ENCODE measurements at regions of chr9 and their contacts with region 1.

Region 1: GRCh38 chr9:109098171-109098959 is 21.4 kb downstream of the TMEM245 start:
- DNase-seq: no peak
- ATAC-seq: no peak
- H3K4me3 ChIP-seq: no peak overlapping the region
- H3K4me3 Mint-ChIP-seq: peak overlapping the region; percentile 22 to 69 (median 63)
- H3K27ac ChIP-seq: no peak overlapping the region
- H3K27ac Mint-ChIP-seq: peak overlapping the region; percentile 65 to 90 (median 74)
- H3K4me1 ChIP-seq: peaks cover 20 to 79% of the 10 kb centered on the region in 2 donors
- H3K4me1 Mint-ChIP-seq: peaks cover 57 to 97% (median 95%) of the 10 kb centered on the region in 7 donors
- H3K27me3 ChIP-seq: no peaks in the 10 kb centered on the region
- H3K27me3 Mint-ChIP-seq: no peaks in the 10 kb centered on the region

Region 2: DNA sequence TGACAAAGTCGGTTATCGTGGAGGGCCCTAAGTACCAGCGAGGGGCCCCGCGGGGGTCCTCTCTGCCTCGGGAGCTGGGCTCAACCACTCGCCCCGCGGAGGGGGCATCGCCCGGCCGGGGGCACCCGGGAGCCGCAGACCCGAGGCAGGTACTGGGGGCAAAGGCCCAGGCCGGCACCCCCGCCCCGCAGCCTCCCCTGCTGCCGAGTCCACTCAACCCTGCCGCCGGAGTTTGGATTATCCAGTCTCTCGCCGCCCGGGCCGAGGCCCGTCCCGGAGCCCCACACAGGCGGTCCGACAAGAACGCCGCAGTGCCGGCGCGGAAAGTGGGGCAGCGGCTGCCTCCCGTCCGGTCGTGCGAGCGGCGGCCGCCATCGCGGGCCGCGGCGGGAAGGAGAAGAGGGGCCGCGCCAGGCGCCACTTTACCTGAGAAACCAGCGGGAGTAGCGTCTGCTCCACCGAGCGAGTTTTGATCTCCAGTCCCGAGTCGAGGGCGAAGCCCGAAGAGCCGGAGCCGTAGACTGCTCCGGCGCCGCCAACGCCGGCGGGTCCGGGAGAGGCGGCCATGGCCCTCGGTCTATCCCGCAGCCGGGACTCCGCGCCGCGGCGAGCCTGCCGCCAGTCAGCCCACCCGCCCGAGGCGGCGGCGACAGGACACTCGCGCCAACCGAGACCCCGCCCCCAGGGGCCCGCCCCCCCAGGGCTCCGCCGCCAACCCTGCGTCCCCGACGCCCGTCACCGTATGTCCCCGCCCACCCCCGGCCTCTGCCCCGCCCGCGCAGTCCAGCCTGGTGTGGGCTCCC is 85.3 kb before region 1 on chr9 and contains the start of gene CTNNAL1:
- CTCF ChIA-PET with region 1: no interaction called
- POLR2A ChIA-PET with region 1: no interaction called
- intact Hi-C with region 1: loop called (anchors 5 kb)
- DNase-seq: peak; percentile 68 to 88 (median 78)
- ATAC-seq: peak; percentile 98
- H3K4me3 ChIP-seq: peak within 1 kb of the TSS; percentile 72
- H3K4me3 Mint-ChIP-seq: peak within 1 kb of the TSS; percentile 93 to 99 (median 97)
- H3K27ac ChIP-seq: peak within 1 kb of the TSS; percentile 77
- H3K27ac Mint-ChIP-seq: peak within 1 kb of the TSS; percentile 79 to 95 (median 92)
- H3K4me1 ChIP-seq: peaks cover 6 to 13% of the 10 kb centered on the region in 2 donors
- H3K4me1 Mint-ChIP-seq: peaks cover 17 to 34% (median 21%) of the 10 kb centered on the region in 7 donors
- H3K27me3 ChIP-seq: no peaks in the 10 kb centered on the region
- H3K27me3 Mint-ChIP-seq: peaks cover 0 to 22% (median 4%) of the 10 kb centered on the region in 5 donors
- total RNA-seq, gene CTNNAL1: 1.1 to 9.9 (median 2.5) TPM

Region 3: GRCh38 chr9:109074236-109074889 is 24.0 kb before region 1 on chr9:
- CTCF ChIA-PET with region 1: no interaction called
- POLR2A ChIA-PET with region 1: no interaction called
- intact Hi-C with region 1: loop called in 1 of 2 experiments (anchors 2 kb)
- DNase-seq: no peak
- ATAC-seq: no peak
- H3K4me3 ChIP-seq: no peak overlapping the region
- H3K4me3 Mint-ChIP-seq: no peak overlapping the region
- H3K27ac ChIP-seq: no peak overlapping the region
- H3K27ac Mint-ChIP-seq: peak overlapping the region in 2 of 9 donors; percentile 13 to 31
- H3K4me1 ChIP-seq: no peaks in the 10 kb centered on the region
- H3K4me1 Mint-ChIP-seq: peaks cover 0 to 2% (median 0%) of the 10 kb centered on the region in 7 donors
- H3K27me3 ChIP-seq: no peaks in the 10 kb centered on the region
- H3K27me3 Mint-ChIP-seq: no peaks in the 10 kb centered on the region

Region 4: DNA sequence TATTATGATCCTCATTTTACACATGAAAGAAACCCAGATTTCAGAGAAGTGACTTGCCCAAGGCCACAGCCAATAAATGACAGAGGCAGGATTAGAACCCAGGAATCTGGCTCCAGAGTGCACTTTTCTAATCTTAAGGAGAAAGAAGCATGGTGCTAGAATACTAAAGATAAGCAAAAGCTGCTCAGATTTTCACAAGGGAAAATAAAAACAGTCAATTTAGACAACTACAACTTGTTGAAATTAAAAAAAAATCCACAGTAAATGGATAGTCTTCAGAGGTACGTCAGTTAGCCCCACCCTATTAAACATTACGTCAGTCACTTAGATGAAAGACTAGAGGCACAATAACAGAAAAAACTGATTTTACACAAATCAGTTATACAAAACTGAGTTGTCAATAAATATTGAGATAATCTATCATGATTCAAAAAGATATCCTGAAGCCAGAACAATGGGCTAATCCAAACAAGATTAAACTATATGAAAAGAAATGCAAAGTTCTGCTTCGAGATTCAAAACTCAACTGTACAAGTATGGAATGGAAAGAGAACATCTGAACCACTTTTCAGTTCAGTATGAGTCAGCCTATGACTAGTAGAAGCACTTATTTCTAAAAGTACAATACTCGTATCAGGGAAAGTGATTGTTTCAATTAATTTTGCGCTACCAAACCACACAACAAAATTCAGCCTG is 12.1 kb after region 1 on chr9:
- CTCF ChIA-PET with region 1: interaction called, 5 read pairs
- POLR2A ChIA-PET with region 1: interaction called, 11 read pairs
- intact Hi-C with region 1: loop called (anchors 1 kb)
- DNase-seq: peak in 7 of 9 donors; percentile 46 to 73 (median 63)
- ATAC-seq: peak; percentile 88
- H3K4me3 ChIP-seq: peak overlapping the region; percentile 28
- H3K4me3 Mint-ChIP-seq: peak overlapping the region; percentile 18 to 87 (median 69)
- H3K27ac ChIP-seq: peak overlapping the region; percentile 77
- H3K27ac Mint-ChIP-seq: peak overlapping the region; percentile 84 to 98 (median 94)
- H3K4me1 ChIP-seq: peaks cover 18 to 52% of the 10 kb centered on the region in 2 donors
- H3K4me1 Mint-ChIP-seq: peaks cover 60 to 90% (median 89%) of the 10 kb centered on the region in 7 donors
- H3K27me3 ChIP-seq: no peaks in the 10 kb centered on the region
- H3K27me3 Mint-ChIP-seq: no peaks in the 10 kb centered on the region

Region 5: GRCh38 chr9:109198736-109199379 is 100.5 kb after region 1 on chr9:
- CTCF ChIA-PET with region 1: no interaction called
- POLR2A ChIA-PET with region 1: no interaction called
- intact Hi-C with region 1: loop called in 1 of 2 experiments (anchors 5 kb)
- DNase-seq: peak in 3 of 9 donors; percentile 5 to 17 (median 9)
- ATAC-seq: no peak
- H3K4me3 ChIP-seq: no peak overlapping the region
- H3K4me3 Mint-ChIP-seq: no peak overlapping the region
- H3K27ac ChIP-seq: no peak overlapping the region
- H3K27ac Mint-ChIP-seq: no peak overlapping the region
- H3K4me1 ChIP-seq: no peaks in the 10 kb centered on the region
- H3K4me1 Mint-ChIP-seq: no peaks in the 10 kb centered on the region
- H3K27me3 ChIP-seq: no peaks in the 10 kb centered on the region
- H3K27me3 Mint-ChIP-seq: peaks cover 0 to 12% (median 6%) of the 10 kb centered on the region in 5 donors

Measured in naive thymus-derived CD4-positive, alpha-beta T cell (primary cell).